ENCODE measurements at regions of chr1 and their contacts with region 1.

Region 1: GRCh38 chr1:32716312-32717148 is 14.0 kb upstream of the SYNC start:
- DNase-seq: no peak
- ATAC-seq: peak; percentile 87
- H3K4me3 ChIP-seq: no peak overlapping the region
- H3K27ac ChIP-seq: no peak overlapping the region
- H3K4me1 ChIP-seq: 0 out of 2 replicates have a peak, but pooled peaks cover 4% of the 10 kb centered on the region
- H3K27me3 ChIP-seq: no peaks in the 10 kb centered on the region
- CTCF ChIP-seq: no peak
- EP300 ChIP-seq: no peak
- POLR2A ChIP-seq: no peak
- RAD21 ChIP-seq: no peak

Region 2: DNA sequence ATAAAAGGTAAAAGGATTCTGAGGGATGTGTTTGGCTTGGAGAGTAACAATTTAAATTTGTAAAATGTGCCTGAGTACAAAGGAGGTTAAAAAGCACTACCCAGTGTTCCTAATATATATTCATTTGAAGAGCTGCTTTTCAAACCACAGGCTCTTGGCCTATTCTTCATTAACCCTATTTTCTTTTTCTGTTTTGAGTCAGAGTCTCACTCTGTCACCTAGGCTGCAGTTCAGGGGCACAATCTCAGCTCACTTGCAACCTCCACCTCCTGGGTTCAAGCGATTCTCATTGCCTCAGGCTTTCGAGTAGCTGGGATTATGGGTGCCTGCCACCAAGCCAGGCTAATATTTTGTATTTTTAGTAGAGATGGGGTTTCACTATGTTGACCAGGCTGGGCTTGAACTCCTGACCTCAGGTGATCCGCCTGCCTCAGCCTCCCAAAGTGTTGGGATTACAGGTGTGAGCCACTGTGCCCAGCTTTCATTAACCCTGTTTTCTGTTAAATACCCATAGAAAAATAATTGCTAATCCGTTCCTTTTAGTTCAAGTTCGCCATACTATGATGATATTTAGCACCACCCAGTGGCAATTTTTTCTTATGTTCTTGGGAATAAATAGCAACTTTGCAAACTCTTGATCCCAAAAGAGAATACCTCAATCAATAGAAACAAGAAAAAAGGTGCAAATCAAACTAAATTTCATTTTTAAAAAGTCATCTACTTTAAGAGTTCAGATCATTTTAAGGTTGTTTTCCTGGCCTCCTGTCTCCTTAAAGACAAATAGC is 96.6 kb before region 1 on chr1:
- CTCF ChIA-PET with region 1: no interaction called
- POLR2A ChIA-PET with region 1: no interaction called
- RAD21 ChIA-PET with region 1: no interaction called
- SMC1A ChIA-PET with region 1: no interaction called
- in situ Hi-C with region 1: no loop called
- intact Hi-C with region 1: no loop called
- DNase-seq: peak; percentile 72
- ATAC-seq: peak; percentile 90
- H3K4me3 ChIP-seq: peak overlapping the region; percentile 12; the same call in 1 of the 2 replicates
- H3K27ac ChIP-seq: peak overlapping the region; percentile 80
- H3K4me1 ChIP-seq: peaks cover 39% of the 10 kb centered on the region
- H3K27me3 ChIP-seq: no peaks in the 10 kb centered on the region
- CTCF ChIP-seq: peak in 2 of 3 experiments; percentile 26 to 29; a peak in 2 of 6 replicates
- EP300 ChIP-seq: peak; percentile 55 to 70; a peak in 3 of 4 replicates
- POLR2A ChIP-seq: no peak
- RAD21 ChIP-seq: peak; percentile 42

Region 3: DNA sequence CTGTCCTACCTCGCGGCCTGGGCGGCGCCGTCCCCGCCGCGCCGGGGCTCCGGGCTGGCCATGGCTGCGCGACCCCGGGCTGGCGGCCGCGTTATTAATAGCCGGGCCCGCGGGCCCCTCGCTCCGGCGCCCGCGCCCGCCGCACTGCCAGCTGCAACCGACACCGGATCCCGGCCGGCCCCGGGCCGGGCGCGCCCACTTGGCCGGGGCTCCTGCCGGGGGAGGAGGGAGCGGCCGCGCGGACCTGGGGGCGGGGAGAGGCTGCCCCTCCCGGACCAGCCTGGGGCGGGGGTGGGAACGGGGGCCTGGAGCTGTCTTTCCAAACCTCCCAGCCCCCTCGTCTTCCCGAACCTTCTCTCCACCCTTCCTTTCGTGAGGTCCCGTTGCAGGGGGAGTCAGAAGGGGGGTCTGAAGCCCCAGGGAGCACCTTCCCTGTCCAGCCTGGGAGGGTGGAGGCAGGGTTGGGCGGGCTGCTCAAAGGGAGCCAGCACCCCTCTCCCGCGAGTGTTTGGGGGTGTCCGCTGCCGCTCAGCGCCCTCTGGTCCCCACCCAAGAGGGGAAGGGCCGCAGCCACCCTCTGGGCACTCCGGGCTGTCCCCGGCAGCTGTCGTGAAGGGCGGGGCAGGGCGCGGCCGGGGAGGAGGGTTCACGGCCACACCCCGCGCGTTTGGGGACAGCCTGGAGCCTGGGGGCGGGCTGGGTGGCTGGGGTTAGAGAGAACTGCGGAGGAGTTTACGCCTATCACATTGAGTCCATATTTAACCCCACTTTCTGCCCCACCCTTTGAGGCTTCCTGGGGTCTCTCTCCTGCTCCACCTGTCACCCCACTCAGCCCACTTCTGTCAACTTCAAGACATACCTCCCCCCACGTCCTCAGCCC is 13.7 kb before region 1 on chr1 and contains the start of gene SYNC:
- CTCF ChIA-PET with region 1: interaction called, 22 read pairs
- POLR2A ChIA-PET with region 1: no interaction called
- RAD21 ChIA-PET with region 1: no interaction called
- SMC1A ChIA-PET with region 1: interaction called, 3 read pairs
- in situ Hi-C with region 1: no loop called
- intact Hi-C with region 1: no loop called
- DNase-seq: no peak
- ATAC-seq: peak; percentile 75
- H3K4me3 ChIP-seq: peak within 1 kb of the TSS; percentile 11; the same call in 1 of the 2 replicates
- H3K27ac ChIP-seq: no peak within 1 kb of the TSS
- H3K4me1 ChIP-seq: no peaks in the 10 kb centered on the region
- H3K27me3 ChIP-seq: peaks cover 6 to 13% of the 10 kb centered on the region in 2 experiments; a peak in 3 of 4 replicates
- CTCF ChIP-seq: no peak
- EP300 ChIP-seq: no peak
- POLR2A ChIP-seq: no peak
- RAD21 ChIP-seq: no peak
- polyA plus RNA-seq, gene SYNC: not detected

Region 4: GRCh38 chr1:32749771-32750170 is 33.2 kb after region 1 on chr1:
- CTCF ChIA-PET with region 1: interaction called, 11 read pairs
- POLR2A ChIA-PET with region 1: interaction called, 3 read pairs
- RAD21 ChIA-PET with region 1: interaction called, 14 read pairs
- SMC1A ChIA-PET with region 1: interaction called, 3 read pairs
- in situ Hi-C with region 1: no loop called
- intact Hi-C with region 1: no loop called
- DNase-seq: no peak
- ATAC-seq: peak; percentile 17; the same call in 2 of the 3 replicates
- H3K4me3 ChIP-seq: no peak overlapping the region
- H3K27ac ChIP-seq: no peak overlapping the region
- H3K4me1 ChIP-seq: peaks cover 7% of the 10 kb centered on the region
- H3K27me3 ChIP-seq: no peaks in the 10 kb centered on the region; a peak in 1 of 4 replicates
- CTCF ChIP-seq: peak in 1 of 3 experiments; percentile 17; a peak in 1 of 6 replicates
- EP300 ChIP-seq: no peak
- POLR2A ChIP-seq: no peak
- RAD21 ChIP-seq: no peak

Region 5: GRCh38 chr1:32773018-32773763 is 56.7 kb after region 1 on chr1:
- CTCF ChIA-PET with region 1: interaction called, 163 read pairs
- POLR2A ChIA-PET with region 1: interaction called, 4 read pairs
- RAD21 ChIA-PET with region 1: interaction called, 65 read pairs
- SMC1A ChIA-PET with region 1: interaction called, 37 read pairs
- in situ Hi-C with region 1: no loop called
- intact Hi-C with region 1: loop called (anchors 1 kb)
- DNase-seq: peak; percentile 20
- ATAC-seq: peak; percentile 95
- H3K4me3 ChIP-seq: no peak overlapping the region
- H3K27ac ChIP-seq: no peak overlapping the region
- H3K4me1 ChIP-seq: no peaks in the 10 kb centered on the region
- H3K27me3 ChIP-seq: no peaks in the 10 kb centered on the region
- CTCF ChIP-seq: peak; percentile 93 to 97 (median 96); a peak in 5 of 6 replicates
- EP300 ChIP-seq: no peak
- POLR2A ChIP-seq: peak; percentile 8; the same call in 1 of the 2 replicates
- RAD21 ChIP-seq: peak; percentile 85

Region 6: DNA sequence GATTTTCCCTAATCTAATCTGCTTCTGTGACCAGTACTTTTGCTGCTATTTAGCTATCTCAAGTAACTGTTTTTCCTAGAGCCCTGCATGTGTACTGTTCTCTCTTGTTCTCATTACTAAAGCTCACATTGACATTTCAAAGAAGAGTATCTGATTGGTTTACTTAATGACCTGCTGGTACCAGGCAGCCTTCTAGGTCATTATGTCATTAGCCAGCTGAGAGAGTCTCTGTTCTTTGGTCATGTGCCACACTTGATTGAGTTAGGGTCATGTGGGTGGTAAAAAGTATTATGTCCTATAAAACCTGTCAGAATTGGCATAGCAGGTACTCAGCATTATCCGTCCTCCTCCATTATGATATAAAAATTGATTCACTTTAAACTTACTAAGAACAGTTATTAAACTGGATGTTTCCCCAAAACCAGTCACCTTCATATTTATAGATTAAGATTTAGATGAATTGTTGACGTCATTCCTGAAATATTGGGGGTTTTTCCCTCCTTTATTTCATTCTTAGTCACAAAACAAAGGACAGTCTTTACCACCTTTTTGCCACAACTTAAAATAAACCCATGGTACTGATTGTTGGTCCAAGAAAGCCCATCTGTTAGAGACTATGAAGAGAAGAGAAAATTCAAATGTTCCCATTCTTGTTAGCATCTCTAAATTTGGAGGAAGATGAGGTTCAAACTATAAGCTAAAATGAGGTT is 132.0 kb after region 1 on chr1:
- CTCF ChIA-PET with region 1: interaction called, 19 read pairs
- POLR2A ChIA-PET with region 1: no interaction called
- RAD21 ChIA-PET with region 1: no interaction called
- SMC1A ChIA-PET with region 1: no interaction called
- in situ Hi-C with region 1: no loop called
- intact Hi-C with region 1: no loop called
- DNase-seq: no peak
- ATAC-seq: peak; percentile 95
- H3K4me3 ChIP-seq: no peak overlapping the region
- H3K27ac ChIP-seq: 0 out of 2 replicates have a peak overlapping the region, but pooled peaks have one; percentile 6
- H3K4me1 ChIP-seq: no peaks in the 10 kb centered on the region
- H3K27me3 ChIP-seq: no peaks in the 10 kb centered on the region
- CTCF ChIP-seq: no peak
- EP300 ChIP-seq: no peak
- POLR2A ChIP-seq: no peak
- RAD21 ChIP-seq: no peak